Cardiac septum (tissue), 1 donor: ENCODE measurements at regions of chr1 and their contacts with region 1.

Region 1: GRCh38 chr1:219419860-219420259 is 193.0 kb downstream of the ZC3H11B start:
- DNase-seq: no peak

Region 2: GRCh38 chr1:219398815-219399396 is 21.0 kb before region 1 on chr1:
- intact Hi-C with region 1: loop called (anchors 2 kb)
- DNase-seq: no peak